A673 (cell line): ENCODE measurements at regions of chr11 and their contacts with region 1.

Region 1: GRCh38 chr11:80227915-80228314 is 787.1 kb upstream of the TENM4 start:
- DNase-seq: no peak
- H3K4me3 ChIP-seq: no peak overlapping the region
- H3K27ac ChIP-seq: no peak overlapping the region
- H3K4me1 ChIP-seq: peaks cover 3% of the 10 kb centered on the region
- H3K27me3 ChIP-seq: no peaks in the 10 kb centered on the region
- CTCF ChIP-seq: no peak

Region 2: GRCh38 chr11:79915629-79916028 is 312.3 kb before region 1 on chr11:
- CTCF ChIA-PET with region 1: no interaction called
- POLR2A ChIA-PET with region 1: interaction called, 12 read pairs
- intact Hi-C with region 1: no loop called
- DNase-seq: no peak
- H3K4me3 ChIP-seq: no peak overlapping the region
- H3K27ac ChIP-seq: no peak overlapping the region
- H3K4me1 ChIP-seq: no peaks in the 10 kb centered on the region
- H3K27me3 ChIP-seq: no peaks in the 10 kb centered on the region
- CTCF ChIP-seq: no peak

Region 3: DNA sequence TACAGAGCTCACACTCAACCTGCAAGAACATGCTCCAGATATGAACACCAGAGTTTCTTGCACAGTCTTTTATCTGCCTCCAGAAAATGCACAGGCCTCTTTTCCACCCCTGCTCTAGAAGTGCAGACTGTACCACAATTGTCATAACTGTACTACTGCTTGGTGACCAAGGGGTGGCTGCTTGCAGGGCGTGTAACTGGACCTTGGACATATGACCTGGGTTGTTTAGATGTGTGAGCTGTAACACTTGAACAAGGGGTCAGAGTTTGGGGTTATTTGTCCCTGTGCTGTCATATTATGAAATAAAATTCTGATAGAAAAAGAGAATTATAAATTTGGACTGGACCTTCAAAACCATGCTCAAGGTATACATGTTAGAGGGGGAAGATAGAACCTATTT is 1320.2 kb after region 1 on chr11:
- CTCF ChIA-PET with region 1: no interaction called
- POLR2A ChIA-PET with region 1: no interaction called
- intact Hi-C with region 1: no loop called
- DNase-seq: no peak
- H3K4me3 ChIP-seq: no peak overlapping the region
- H3K27ac ChIP-seq: no peak overlapping the region
- H3K4me1 ChIP-seq: no peaks in the 10 kb centered on the region
- H3K27me3 ChIP-seq: no peaks in the 10 kb centered on the region
- CTCF ChIP-seq: no peak